ENCODE measurements at regions of chr17 and their contacts with region 1.

Region 1: DNA sequence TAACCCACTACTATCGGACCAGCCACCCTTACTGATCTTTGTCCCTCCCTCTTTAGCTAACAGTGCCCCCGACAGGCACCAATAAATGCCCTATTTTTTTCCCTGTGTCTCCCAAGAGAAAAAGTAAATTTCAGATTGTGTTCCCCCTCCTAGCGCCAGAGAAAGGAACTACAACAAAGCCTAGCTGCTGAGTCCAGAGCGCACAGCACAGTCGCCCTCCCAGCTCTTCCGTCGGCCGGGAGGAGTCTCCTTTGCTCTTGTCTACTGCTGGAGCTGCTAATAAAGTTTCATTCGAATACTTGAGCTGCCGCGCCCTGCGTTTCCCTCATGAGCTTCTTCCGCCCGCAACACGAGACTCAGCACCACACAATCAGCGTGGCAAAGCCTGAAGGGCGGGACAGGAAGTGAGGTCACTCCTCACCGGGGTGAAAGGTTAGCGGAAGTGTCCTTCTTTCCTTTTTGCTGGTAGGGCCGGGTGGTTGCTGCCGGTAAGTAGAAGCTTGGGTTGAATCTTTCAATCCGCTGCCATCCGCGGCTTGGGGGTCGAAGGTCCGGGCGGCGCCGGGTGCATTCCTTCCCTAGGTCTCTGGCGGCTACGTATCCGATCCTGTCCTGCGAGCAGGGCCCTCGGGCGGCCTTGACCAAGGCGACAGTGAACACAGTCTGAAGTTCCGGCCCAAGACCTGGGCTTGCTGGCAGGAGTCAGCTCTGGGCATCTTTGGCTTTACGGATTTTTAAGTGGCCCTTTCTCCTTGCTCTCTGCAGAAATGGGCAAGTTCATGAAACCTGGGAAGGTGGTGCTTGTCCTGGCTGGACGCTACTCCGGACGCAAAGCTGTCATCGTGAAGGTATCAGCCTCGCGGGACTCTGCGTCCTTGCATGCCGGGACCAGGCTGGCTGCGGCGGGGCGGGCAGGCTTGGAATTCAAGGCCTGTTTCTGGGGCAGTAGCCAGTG is at the start of gene RPL27:
- DNase-seq: peak; percentile 95

Region 2: DNA sequence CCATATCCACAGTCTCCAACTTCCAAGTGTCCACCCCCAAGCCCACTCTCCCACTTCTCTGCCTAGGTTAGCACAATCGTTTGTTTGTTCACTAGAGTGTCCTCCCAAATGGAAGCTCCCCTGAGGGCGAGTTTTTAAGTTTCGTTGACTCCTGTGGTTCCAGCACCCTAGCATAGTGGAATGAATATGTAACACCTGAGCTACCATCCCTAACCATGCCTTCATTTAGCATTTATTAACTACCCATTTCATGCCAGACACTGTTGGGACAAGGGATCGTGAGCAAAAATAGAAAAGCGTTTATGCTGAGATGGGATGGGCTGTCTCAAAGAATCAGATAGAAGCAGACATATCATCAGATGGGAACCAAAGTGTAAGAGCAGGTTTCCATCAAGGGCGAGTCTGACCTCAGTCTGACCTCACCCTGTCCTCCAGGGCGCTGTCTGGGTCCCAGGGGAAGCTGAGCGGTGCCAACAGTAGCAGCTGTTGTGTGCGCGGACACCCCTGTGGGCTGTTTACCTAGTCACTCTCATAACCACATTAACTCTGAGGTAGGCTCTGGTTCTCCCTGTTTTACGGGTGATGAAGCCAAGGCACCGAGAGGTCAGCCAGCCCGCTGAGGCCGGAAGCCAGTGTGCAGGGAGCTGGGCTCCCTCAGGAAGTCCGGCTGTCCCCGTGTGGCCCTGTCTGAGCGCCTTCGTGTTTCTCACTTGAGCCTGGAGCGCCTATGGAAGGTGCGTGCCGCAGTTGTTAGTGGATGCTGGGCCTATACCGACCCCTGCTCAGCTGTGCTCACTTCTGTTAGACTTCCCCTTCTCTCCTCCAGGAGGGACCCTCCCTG is 1025.5 kb before region 1 on chr17:
- CTCF ChIA-PET with region 1: no interaction called
- POLR2A ChIA-PET with region 1: no interaction called
- DNase-seq: no peak

Region 3: GRCh38 chr17:42819944-42820535 is 178.2 kb before region 1 on chr17:
- CTCF ChIA-PET with region 1: interaction called, 7 read pairs
- POLR2A ChIA-PET with region 1: interaction called, 13 read pairs
- DNase-seq: peak; percentile 74

Region 4: DNA sequence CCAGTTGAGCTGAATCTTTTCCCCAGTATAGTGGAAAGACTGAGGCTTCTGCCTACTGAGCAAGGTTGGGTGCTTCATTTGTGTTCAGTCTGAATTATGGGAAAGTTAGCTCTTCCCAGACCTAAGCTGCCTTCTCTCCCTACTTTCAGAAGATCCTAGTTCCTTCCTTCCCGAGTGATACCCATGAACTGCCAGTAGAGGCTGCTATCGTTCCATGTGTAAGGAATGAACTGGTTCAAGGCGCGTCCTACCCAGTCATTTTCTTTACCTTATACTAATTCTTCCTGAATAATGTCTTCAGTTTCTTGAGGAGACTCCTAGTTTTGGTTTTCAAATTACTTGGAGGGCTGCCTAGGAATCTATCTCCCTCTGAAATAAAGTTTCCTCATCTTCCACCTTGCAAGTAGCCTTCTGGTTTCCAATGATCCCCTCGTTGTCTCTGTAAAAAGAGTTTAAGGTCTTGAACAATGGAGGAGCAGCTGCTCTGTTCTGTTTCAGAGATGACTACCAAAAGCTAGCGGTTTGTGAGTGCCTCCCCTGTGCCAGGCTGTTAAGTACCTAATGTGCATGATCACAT is 154.8 kb before region 1 on chr17:
- CTCF ChIA-PET with region 1: interaction called, 5 read pairs
- POLR2A ChIA-PET with region 1: interaction called, 10 read pairs
- DNase-seq: peak; percentile 71

Region 5: DNA sequence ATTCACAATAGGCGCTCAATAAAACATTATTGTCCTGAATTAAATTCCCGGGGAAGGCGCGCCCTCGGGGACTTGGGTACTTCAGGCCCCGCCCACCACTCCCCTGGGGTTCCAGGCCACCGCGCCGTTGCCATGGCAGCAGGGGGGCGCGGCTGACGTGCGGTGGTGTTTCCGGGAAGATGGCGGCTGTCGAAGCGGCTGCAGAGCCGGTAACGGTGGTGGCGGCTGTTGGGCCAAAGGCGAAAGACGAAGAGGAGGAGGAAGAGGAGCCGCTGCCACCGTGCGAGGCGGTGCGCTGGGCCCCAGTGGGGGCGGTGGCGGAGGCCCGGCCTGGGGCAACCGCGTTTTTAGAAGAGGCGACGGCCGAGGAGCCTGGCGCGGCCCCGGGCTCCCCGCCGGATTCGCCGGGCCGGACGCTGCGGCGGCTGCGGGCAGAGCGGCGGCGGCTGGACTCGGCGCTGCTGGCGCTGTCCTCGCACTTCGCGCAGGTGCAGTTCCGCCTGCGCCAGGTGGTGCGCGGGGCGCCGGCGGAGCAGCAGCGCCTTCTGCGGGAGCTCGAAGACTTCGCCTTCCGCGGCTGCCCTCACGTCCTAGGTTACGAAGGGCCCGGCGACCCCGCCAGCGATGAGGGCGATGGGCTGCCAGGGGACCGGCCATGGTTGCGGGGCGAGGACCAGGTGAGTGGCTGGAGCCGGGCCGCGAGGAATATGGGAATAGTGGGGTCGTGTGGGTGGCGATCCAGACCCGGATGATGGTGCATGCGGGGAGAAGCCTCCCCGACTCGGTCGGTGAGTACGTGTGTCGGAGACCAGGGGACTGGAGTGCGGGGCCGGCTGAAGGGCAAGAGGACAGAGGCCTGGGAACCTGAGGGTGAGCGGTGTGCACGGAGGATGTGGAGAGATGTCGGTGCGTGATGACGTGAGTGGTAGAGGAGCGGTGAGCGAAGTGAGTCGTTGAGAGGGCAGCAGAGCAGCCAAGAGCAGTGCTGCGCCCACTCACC is 17.6 kb before region 1 on chr17 and contains the start of gene RUNDC1:
- CTCF ChIA-PET with region 1: interaction called, 9 read pairs
- POLR2A ChIA-PET with region 1: interaction called, 32 read pairs
- DNase-seq: peak; percentile 93

Region 6: DNA sequence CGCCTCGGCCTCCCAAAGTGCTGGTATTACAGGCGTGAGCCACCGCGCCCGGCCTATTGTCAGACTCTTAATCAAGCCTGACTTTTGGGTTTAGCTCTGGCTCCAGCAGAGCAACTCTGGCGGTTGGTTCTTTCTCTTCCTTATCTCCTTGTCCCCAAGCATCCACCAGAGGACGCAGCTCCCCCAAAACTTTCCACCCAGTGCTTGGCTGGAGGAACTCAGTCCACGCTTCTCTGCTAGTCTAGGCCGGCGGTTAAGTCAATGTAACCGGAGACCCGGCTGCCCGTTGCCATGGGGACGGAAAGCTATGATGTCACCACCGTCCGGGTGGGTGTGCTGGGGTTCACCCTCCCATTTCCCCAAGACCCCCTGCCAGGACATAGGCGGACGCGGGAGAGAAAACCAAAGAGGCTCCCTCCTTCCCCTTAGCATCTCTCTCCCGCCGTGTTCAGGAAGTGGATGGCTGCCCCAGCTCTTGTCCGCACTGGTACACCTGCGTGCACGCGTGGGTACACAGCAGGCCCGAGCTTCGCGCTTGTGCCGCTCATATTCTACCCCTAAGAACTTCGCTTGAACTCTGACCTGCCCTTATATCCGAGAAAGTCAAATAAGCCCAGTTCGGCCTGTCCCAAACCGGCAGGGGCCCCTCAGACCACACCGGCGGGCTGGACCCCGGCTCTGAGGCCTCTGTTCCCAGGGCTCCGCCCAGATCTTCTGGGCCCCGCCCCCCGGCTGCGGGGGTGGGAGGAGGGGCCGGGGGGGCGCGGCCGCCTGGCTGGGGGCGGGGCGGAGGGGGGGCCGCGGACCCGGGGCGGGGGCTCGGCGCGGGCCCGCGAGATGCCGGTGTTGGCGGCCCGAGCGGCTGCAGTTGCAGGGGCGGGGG is 26.4 kb after region 1 on chr17 and contains the start of gene RND2:
- CTCF ChIA-PET with region 1: no interaction called
- POLR2A ChIA-PET with region 1: interaction called, 33 read pairs
- DNase-seq: peak; percentile 81